GM12878 (cell line): ENCODE measurements at regions of chr10 and their contacts with region 1.

Region 1: GRCh38 chr10:102917962-102918816 is at the start of gene CNNM2:
- DNase-seq: peak; percentile 98
- ATAC-seq: peak; percentile 94
- H3K4me3 ChIP-seq: peak within 1 kb of the TSS; percentile 92
- H3K27ac ChIP-seq: peak within 1 kb of the TSS; percentile 72
- H3K4me1 ChIP-seq: peaks cover 16% of the 10 kb centered on the region
- H3K27me3 ChIP-seq: no peaks in the 10 kb centered on the region; a peak in 1 of 4 replicates
- CTCF ChIP-seq: no peak
- EP300 ChIP-seq: no peak
- POLR2A ChIP-seq: peak; percentile 90
- RAD21 ChIP-seq: no peak
- polyA plus RNA-seq, gene CNNM2: 0.18 to 0.33 TPM

Region 2: DNA sequence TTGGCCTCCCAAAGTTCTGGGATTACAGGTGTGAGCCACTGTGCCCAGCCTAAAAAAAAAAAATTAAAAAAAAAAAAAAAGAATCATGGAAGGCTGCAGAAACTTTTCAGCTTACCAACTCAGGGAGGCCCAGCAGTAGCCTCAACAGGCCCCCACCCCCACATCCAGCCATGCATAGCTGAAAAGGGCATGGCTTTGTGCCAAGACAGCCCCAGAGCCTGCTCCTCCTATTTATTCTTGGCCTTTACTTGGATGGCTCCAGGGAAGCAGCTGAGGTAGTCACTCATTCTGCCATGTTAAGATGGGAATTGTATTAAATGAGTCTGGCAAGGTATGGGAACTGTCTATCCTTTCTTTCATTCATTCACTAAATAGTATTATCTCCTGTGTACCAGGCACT is 13.8 kb before region 1 on chr10:
- CTCF ChIA-PET with region 1: interaction called, 28 read pairs
- POLR2A ChIA-PET with region 1: no interaction called
- RAD21 ChIA-PET with region 1: interaction called, 4 read pairs
- SMC1A ChIA-PET with region 1: interaction called, 20 read pairs
- in situ Hi-C with region 1: no loop called
- intact Hi-C with region 1: no loop called
- DNase-seq: no peak
- ATAC-seq: no peak
- H3K4me3 ChIP-seq: no peak overlapping the region
- H3K27ac ChIP-seq: no peak overlapping the region
- H3K4me1 ChIP-seq: no peaks in the 10 kb centered on the region
- H3K27me3 ChIP-seq: no peaks in the 10 kb centered on the region
- CTCF ChIP-seq: no peak
- EP300 ChIP-seq: no peak
- POLR2A ChIP-seq: no peak
- RAD21 ChIP-seq: no peak

Region 3: GRCh38 chr10:103062604-103063590 is 144.7 kb after region 1 on chr10:
- CTCF ChIA-PET with region 1: interaction called, 174 read pairs
- POLR2A ChIA-PET with region 1: interaction called, 7 read pairs
- RAD21 ChIA-PET with region 1: interaction called, 49 read pairs
- SMC1A ChIA-PET with region 1: interaction called, 164 read pairs
- in situ Hi-C with region 1: loop called (anchors 5 kb)
- intact Hi-C with region 1: no loop called
- DNase-seq: no peak
- ATAC-seq: no peak
- H3K4me3 ChIP-seq: no peak overlapping the region
- H3K27ac ChIP-seq: no peak overlapping the region
- H3K4me1 ChIP-seq: peaks cover 8% of the 10 kb centered on the region
- H3K27me3 ChIP-seq: no peaks in the 10 kb centered on the region
- CTCF ChIP-seq: 0 out of 6 replicates have a peak, but pooled peaks of 1 of the 3 experiments have one; percentile 4
- EP300 ChIP-seq: no peak
- POLR2A ChIP-seq: no peak
- RAD21 ChIP-seq: peak; percentile 17; the same call in 1 of the 2 replicates

Region 4: GRCh38 chr10:103192451-103193106 is 274.4 kb after region 1 on chr10:
- CTCF ChIA-PET with region 1: interaction called, 12 read pairs
- POLR2A ChIA-PET with region 1: interaction called, 4 read pairs
- RAD21 ChIA-PET with region 1: interaction called, 6 read pairs
- SMC1A ChIA-PET with region 1: interaction called, 4 read pairs
- in situ Hi-C with region 1: no loop called
- intact Hi-C with region 1: no loop called
- DNase-seq: no peak
- ATAC-seq: peak; percentile 82
- H3K4me3 ChIP-seq: peak overlapping the region; percentile 85
- H3K27ac ChIP-seq: peak overlapping the region; percentile 92
- H3K4me1 ChIP-seq: peaks cover 7% of the 10 kb centered on the region
- H3K27me3 ChIP-seq: no peaks in the 10 kb centered on the region
- CTCF ChIP-seq: no peak
- EP300 ChIP-seq: no peak
- POLR2A ChIP-seq: peak; percentile 71
- RAD21 ChIP-seq: no peak

Region 5: GRCh38 chr10:103481974-103482531 is 563.9 kb after region 1 on chr10:
- CTCF ChIA-PET with region 1: interaction called, 4 read pairs
- POLR2A ChIA-PET with region 1: no interaction called
- RAD21 ChIA-PET with region 1: no interaction called
- SMC1A ChIA-PET with region 1: interaction called, 5 read pairs
- in situ Hi-C with region 1: no loop called
- intact Hi-C with region 1: loop called (anchors 2 kb)
- DNase-seq: no peak
- ATAC-seq: peak; percentile 93
- H3K4me3 ChIP-seq: no peak overlapping the region
- H3K27ac ChIP-seq: no peak overlapping the region
- H3K4me1 ChIP-seq: no peaks in the 10 kb centered on the region
- H3K27me3 ChIP-seq: no peaks in the 10 kb centered on the region
- CTCF ChIP-seq: peak; percentile 67 to 82 (median 76)
- EP300 ChIP-seq: no peak
- POLR2A ChIP-seq: no peak
- RAD21 ChIP-seq: peak; percentile 83